Mucosa of descending colon (tissue), 3 donors: ENCODE measurements at regions of chr6 and their contacts with region 1.

Region 1: GRCh38 chr6:157314705-157315321 is 8.5 kb downstream of the TMEM242 start:
- DNase-seq: peak in 1 of 3 donors; percentile 40
- ATAC-seq: peak; percentile 84
- H3K4me3 ChIP-seq: no peak overlapping the region
- H3K4me1 ChIP-seq: no peaks in the 10 kb centered on the region
- CTCF ChIP-seq: peak; percentile 32

Region 2: DNA sequence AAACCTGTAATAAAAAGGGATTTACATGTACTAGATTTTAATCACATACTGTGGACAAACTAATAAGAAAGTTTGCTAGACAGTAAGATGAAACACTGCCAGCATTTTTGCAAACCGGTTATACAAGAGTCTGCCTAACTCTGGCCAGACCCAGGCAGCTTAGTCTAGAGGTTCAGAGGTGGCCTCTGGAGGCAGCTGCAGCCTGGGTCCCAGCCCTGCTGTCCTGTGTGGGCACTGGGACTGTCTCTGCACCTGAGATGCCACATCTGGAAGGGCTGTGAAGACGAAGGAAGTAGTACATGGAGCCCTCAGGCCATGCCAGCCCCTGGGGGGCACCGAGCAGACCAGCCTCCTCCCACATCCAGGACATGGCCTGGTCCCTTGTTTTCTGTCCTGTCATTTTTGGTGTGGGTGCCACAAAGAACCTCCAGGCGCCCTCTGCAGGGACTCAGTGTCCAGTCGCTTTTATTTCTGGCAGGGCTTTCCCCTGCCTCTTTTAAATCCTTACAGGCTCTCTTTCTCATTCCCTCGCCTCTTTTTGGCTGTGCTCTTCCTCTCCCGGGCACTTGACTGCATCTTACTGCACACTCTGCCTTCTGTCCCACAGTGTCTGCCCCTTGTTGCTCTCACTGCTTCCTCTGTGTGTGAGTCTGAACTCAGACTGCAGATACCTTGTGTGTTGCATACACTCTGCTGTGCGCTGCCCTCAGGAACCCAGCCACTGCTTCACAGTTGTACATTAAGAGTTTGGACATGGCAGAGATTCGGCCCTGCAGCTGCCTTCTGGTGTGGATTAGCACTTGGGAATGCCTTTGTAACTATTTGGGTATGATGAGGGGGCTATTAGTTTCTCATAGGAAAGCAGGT is 282.9 kb after region 1 on chr6:
- intact Hi-C with region 1: loop called in 1 of 2 experiments (anchors 5 kb)
- DNase-seq: peak in 2 of 3 donors; percentile 72 to 79
- ATAC-seq: peak; percentile 81
- H3K4me3 ChIP-seq: no peak overlapping the region
- H3K4me1 ChIP-seq: peaks cover 8% of the 10 kb centered on the region
- CTCF ChIP-seq: peak; percentile 7

Region 3: GRCh38 chr6:157667211-157668008 is 352.6 kb after region 1 on chr6:
- intact Hi-C with region 1: loop called (anchors 5 to 10 kb)
- DNase-seq: peak in 1 of 3 donors; percentile 78
- ATAC-seq: peak; percentile 75
- H3K4me3 ChIP-seq: no peak overlapping the region
- H3K4me1 ChIP-seq: peaks cover 11% of the 10 kb centered on the region
- CTCF ChIP-seq: peak; percentile 65